ENCODE measurements at regions of chr6 and their contacts with region 1.

Region 1: GRCh38 chr6:35731736-35732532 is 4.9 kb upstream of the ARMC12 start:
- DNase-seq: peak; percentile 67
- ATAC-seq: peak; percentile 70
- H3K4me3 ChIP-seq: peak overlapping the region; percentile 86
- H3K27ac ChIP-seq: peak overlapping the region; percentile 89
- H3K4me1 ChIP-seq: peaks cover 44% of the 10 kb centered on the region
- H3K27me3 ChIP-seq: no peaks in the 10 kb centered on the region
- CTCF ChIP-seq: peak in 2 of 3 experiments; percentile 1 to 22; a peak in 1 of 6 replicates
- EP300 ChIP-seq: peak; percentile 33 to 68; a peak in 1 of 4 replicates
- POLR2A ChIP-seq: peak; percentile 70
- RAD21 ChIP-seq: no peak

Region 2: GRCh38 chr6:35522660-35523658 is 209.0 kb before region 1 on chr6:
- CTCF ChIA-PET with region 1: interaction called, 168 read pairs
- POLR2A ChIA-PET with region 1: interaction called, 3 read pairs
- RAD21 ChIA-PET with region 1: interaction called, 49 read pairs
- SMC1A ChIA-PET with region 1: interaction called, 25 read pairs
- in situ Hi-C with region 1: loop called (anchors 5 kb)
- intact Hi-C with region 1: loop called (anchors 1 kb)
- DNase-seq: peak; percentile 28
- ATAC-seq: peak; percentile 94
- H3K4me3 ChIP-seq: peak overlapping the region; percentile 43; the same call in 1 of the 2 replicates
- H3K27ac ChIP-seq: no peak overlapping the region
- H3K4me1 ChIP-seq: no peaks in the 10 kb centered on the region
- H3K27me3 ChIP-seq: peaks cover 0 to 1% of the 10 kb centered on the region in 2 experiments; a peak in 2 of 4 replicates
- CTCF ChIP-seq: peak; percentile 93 to 99 (median 97)
- EP300 ChIP-seq: no peak; a peak in 1 of 4 replicates
- POLR2A ChIP-seq: no peak
- RAD21 ChIP-seq: peak; percentile 90

Region 3: DNA sequence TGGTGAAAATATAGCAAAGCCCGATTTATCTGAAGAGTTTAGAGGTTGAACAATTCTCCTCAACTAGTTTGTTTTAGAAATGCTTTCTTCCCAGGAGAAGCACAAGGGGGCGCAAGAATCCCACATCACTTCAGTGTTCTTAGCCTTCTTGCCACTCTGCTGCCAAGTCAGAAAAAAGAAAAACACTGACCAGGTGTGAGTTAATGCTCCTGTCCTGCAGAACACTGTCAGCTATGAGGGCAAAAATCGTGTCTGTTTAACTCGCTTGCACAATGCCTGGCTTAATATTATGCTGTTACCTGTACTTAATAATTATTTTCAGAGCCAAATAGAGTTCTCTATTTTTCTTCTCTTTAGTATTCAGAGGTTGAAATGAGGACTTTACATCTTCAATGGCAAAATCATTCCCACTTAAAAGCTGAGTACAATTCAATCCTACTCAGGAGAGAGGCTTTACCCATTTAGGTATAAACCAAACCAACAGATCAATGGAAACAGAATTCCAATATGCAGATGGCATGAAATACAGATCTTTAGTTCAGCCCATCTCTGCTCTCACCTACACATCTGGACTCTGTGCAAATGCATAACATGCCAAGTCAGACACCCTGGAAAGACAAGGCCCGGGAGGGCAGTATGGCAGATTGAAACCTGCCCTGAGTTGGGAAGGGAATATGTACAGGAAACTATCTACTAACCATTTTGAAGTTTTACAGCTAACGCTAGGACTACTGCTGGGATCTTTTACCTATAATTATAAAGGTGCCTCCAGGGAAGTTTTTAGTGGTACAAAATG is 147.8 kb before region 1 on chr6:
- CTCF ChIA-PET with region 1: interaction called, 374 read pairs
- POLR2A ChIA-PET with region 1: interaction called, 3 read pairs
- RAD21 ChIA-PET with region 1: interaction called, 91 read pairs
- SMC1A ChIA-PET with region 1: interaction called, 149 read pairs
- in situ Hi-C with region 1: loop called (anchors 5 kb)
- intact Hi-C with region 1: loop called (anchors 1 kb)
- DNase-seq: peak; percentile 37
- ATAC-seq: peak; percentile 87
- H3K4me3 ChIP-seq: no peak overlapping the region
- H3K27ac ChIP-seq: no peak overlapping the region
- H3K4me1 ChIP-seq: no peaks in the 10 kb centered on the region
- H3K27me3 ChIP-seq: no peaks in the 10 kb centered on the region
- CTCF ChIP-seq: peak; percentile 75 to 91 (median 77)
- EP300 ChIP-seq: no peak
- POLR2A ChIP-seq: no peak
- RAD21 ChIP-seq: peak; percentile 98

Region 4: GRCh38 chr6:35624341-35625070 is 107.4 kb before region 1 on chr6:
- CTCF ChIA-PET with region 1: interaction called, 36 read pairs
- POLR2A ChIA-PET with region 1: no interaction called
- RAD21 ChIA-PET with region 1: interaction called, 8 read pairs
- SMC1A ChIA-PET with region 1: interaction called, 7 read pairs
- in situ Hi-C with region 1: no loop called
- intact Hi-C with region 1: no loop called
- DNase-seq: no peak
- ATAC-seq: no peak
- H3K4me3 ChIP-seq: no peak overlapping the region
- H3K27ac ChIP-seq: no peak overlapping the region
- H3K4me1 ChIP-seq: no peaks in the 10 kb centered on the region
- H3K27me3 ChIP-seq: no peaks in the 10 kb centered on the region
- CTCF ChIP-seq: peak in 1 of 3 experiments; percentile 23; a peak in 2 of 6 replicates
- EP300 ChIP-seq: no peak
- POLR2A ChIP-seq: no peak
- RAD21 ChIP-seq: no peak

Region 5: GRCh38 chr6:35669451-35670045 is 62.4 kb before region 1 on chr6:
- CTCF ChIA-PET with region 1: interaction called, 54 read pairs
- POLR2A ChIA-PET with region 1: interaction called, 4 read pairs
- RAD21 ChIA-PET with region 1: interaction called, 12 read pairs
- SMC1A ChIA-PET with region 1: interaction called, 17 read pairs
- in situ Hi-C with region 1: no loop called
- intact Hi-C with region 1: loop called (anchors 5 kb)
- DNase-seq: no peak
- ATAC-seq: peak; percentile 79
- H3K4me3 ChIP-seq: peak overlapping the region; percentile 52; the same call in 1 of the 2 replicates
- H3K27ac ChIP-seq: peak overlapping the region; percentile 89
- H3K4me1 ChIP-seq: peaks cover 16% of the 10 kb centered on the region
- H3K27me3 ChIP-seq: no peaks in the 10 kb centered on the region
- CTCF ChIP-seq: no peak
- EP300 ChIP-seq: no peak
- POLR2A ChIP-seq: no peak
- RAD21 ChIP-seq: no peak

Region 6: GRCh38 chr6:35719830-35720733 is 11.9 kb before region 1 on chr6:
- CTCF ChIA-PET with region 1: interaction called, 9 read pairs
- POLR2A ChIA-PET with region 1: interaction called, 11 read pairs
- RAD21 ChIA-PET with region 1: interaction called, 36 read pairs
- SMC1A ChIA-PET with region 1: interaction called, 11 read pairs
- in situ Hi-C with region 1: no loop called
- intact Hi-C with region 1: no loop called
- DNase-seq: peak; percentile 70
- ATAC-seq: peak; percentile 80
- H3K4me3 ChIP-seq: peak overlapping the region; percentile 49; the same call in 1 of the 2 replicates
- H3K27ac ChIP-seq: peak overlapping the region; percentile 76
- H3K4me1 ChIP-seq: peaks cover 41% of the 10 kb centered on the region
- H3K27me3 ChIP-seq: no peaks in the 10 kb centered on the region
- CTCF ChIP-seq: no peak
- EP300 ChIP-seq: peak in 1 of 2 experiments; percentile 79; a peak in 2 of 4 replicates
- POLR2A ChIP-seq: no peak; the same call in 1 of the 2 replicates
- RAD21 ChIP-seq: no peak

Region 7: GRCh38 chr6:35797837-35798526 is 66.0 kb after region 1 on chr6:
- CTCF ChIA-PET with region 1: no interaction called
- POLR2A ChIA-PET with region 1: no interaction called
- RAD21 ChIA-PET with region 1: no interaction called
- SMC1A ChIA-PET with region 1: no interaction called
- in situ Hi-C with region 1: no loop called
- intact Hi-C with region 1: no loop called
- DNase-seq: no peak
- ATAC-seq: no peak
- H3K4me3 ChIP-seq: no peak overlapping the region
- H3K27ac ChIP-seq: no peak overlapping the region
- H3K4me1 ChIP-seq: no peaks in the 10 kb centered on the region
- H3K27me3 ChIP-seq: 0 out of 4 replicates have a peak, but pooled peaks cover 0 to 1% of the 10 kb centered on the region in 2 experiments
- CTCF ChIP-seq: no peak
- EP300 ChIP-seq: no peak
- POLR2A ChIP-seq: no peak
- RAD21 ChIP-seq: no peak